ENCODE measurements at regions of chr20 and their contacts with region 1.

Region 1: GRCh38 chr20:35226775-35227681 is 538 bp downstream of the MMP24 start:
- DNase-seq: peak; percentile 85

Region 2: DNA sequence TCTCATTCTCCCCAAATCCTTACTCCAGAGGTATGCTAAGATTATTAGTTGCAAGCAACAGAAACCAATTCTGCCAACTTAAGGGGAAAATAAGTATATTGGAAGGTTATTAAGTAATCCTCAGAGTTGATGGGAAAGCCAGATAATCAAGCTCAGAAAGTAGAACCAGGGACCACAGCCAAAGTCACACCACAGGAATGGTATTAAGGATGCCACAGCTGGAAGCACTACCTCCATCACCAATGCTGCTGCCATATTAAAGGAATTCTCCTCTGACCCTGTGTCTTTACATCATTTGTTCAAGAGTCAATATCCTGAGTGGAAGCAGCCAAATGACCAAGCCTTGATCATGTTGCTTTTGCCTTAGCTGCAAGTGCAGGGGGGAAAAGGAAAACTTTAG is 45.3 kb before region 1 on chr20:
- intact Hi-C with region 1: no loop called
- DNase-seq: no peak

Region 3: DNA sequence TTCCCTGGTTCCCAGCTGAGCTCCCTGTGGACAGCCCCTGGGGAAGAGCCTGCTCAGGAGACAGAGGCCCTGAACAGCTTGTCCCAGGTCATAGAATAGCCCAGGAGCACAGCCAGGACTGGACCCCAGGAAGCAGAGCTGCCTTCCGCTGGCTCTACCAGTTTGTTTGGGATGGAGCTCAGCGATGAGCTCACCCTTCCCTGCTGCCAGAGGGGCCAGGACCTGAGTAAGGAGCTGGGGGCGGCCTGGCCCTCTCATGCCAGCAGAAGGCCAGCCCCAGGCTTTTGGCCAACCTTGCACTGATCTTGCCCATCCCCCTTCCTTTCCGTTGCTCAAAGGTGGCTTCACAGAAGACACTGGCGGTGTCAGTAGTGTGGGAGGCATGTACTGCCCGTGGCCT is 33.4 kb after region 1 on chr20:
- intact Hi-C with region 1: loop called in 1 of 2 experiments (anchors 1 kb)
- DNase-seq: no peak